Right ventricle myocardium superior (tissue), 1 donor: ENCODE measurements at regions of chr11 and their contacts with region 1.

Region 1: GRCh38 chr11:118051611-118052461 is 25.0 kb upstream of the TMPRSS4 start:
- DNase-seq: no peak
- ATAC-seq: no peak

Region 2: DNA sequence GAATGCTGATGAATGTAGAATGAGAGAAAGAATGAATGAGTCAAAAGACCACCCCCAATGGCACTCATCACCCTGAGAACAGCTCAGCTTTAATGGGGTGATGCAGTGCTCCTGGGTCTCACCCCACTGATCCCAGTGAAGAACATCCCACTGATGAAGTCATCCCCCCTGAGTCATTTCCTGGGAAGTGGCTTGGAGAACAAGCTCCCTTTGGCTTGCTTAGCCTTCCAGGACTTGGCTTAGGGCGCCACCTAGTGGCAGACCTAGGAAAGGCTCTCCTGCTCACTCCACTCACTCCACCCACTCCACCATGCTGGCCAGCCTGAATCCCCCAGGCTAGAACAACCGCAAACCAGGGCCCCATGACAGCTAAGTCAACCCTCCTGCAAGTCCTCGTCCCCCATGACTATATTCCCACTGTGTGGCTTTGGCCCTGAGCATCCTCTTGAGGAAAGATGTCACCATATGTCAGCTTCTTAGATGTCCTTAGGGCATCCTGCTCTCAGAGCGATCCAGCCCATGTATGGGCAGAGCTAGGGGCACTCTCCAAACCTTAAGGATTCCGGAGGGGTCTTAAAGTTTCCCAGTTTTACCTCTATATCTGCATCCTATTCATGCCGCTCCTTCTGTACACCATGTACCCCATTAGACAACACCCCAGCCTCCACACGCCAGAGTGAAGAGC is 104.9 kb before region 1 on chr11:
- intact Hi-C with region 1: loop called (anchors 5 kb)
- DNase-seq: peak; percentile 91
- ATAC-seq: peak; percentile 97

Region 3: DNA sequence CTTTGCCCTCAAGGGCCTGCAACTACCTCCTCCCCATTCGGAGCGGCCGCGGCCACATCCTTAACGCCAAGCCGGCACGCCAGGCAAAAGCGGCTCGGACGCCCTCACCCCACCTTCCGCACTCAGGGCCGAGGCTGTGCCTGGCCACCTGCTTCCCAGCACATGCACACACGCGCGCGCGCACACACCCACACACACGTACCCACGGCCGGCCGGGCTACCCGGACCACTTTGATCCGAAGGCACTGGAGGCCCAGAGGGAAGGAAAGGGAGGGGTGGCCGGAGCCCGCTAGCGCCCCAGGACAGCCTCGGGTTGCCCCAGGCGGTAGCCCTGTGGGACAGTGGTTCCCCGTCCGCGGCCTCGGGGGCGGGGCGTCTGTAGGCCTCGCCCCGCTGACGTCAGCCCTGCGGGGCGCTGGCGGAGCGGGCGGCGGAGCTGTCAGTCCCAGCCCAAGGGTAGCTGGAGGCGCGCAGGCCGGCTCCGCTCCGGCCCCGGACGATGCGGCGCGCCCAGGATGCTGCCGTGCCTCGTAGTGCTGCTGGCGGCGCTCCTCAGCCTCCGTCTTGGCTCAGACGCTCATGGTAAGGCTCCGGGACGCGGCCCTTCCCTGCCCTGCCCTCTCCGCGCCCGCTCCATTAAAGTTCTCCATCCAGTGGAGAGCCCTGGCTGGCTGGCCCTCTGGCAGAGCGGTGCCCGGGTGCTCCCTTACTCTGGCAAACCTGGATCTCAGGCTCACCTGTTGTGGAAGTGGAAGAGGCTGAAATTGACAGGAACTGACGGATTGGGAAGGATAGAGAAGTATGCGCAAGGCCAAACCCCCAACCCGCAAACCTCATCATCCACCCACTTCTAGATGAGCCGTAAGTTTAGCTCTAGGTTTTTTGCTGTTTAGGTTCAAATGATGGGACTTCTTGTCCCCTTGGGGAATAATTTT is 65.6 kb before region 1 on chr11 and contains the start of gene IL10RA:
- intact Hi-C with region 1: no loop called
- DNase-seq: peak; percentile 93
- ATAC-seq: peak; percentile 97
- total RNA-seq, gene IL10RA: 6.2 TPM